ENCODE measurements at regions of chr9 and their contacts with region 1.

Region 1: GRCh38 chr9:20898885-20899554 is 132.4 kb downstream of the HACD4 start:
- DNase-seq: no peak
- ATAC-seq: no peak
- H3K4me3 ChIP-seq: no peak overlapping the region
- H3K27ac ChIP-seq: no peak overlapping the region
- H3K4me1 ChIP-seq: peaks cover 8% of the 10 kb centered on the region
- H3K27me3 ChIP-seq: no peaks in the 10 kb centered on the region
- CTCF ChIP-seq: no peak
- EP300 ChIP-seq: no peak
- POLR2A ChIP-seq: no peak
- RAD21 ChIP-seq: no peak

Region 2: DNA sequence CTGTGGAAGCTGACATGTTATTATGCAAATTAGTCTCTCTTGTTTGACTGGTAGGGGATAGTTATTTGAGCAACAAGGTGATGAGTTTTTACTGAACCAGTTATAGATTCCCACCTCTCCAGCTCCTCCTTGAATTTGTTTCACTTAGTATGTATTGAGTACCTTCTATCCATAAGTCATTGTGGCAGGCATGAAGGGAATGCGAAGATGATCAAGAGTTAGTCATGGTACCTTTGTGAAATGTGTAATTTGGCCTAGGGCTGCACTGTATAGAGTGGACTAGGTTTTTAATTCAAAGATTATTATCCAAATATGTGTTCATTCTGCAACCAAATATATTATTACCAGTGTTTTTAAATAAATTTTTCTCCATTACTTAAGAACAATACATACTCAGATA is 22.3 kb after region 1 on chr9:
- CTCF ChIA-PET with region 1: no interaction called
- POLR2A ChIA-PET with region 1: no interaction called
- in situ Hi-C with region 1: no loop called
- intact Hi-C with region 1: loop called (anchors 1 kb)
- DNase-seq: no peak
- ATAC-seq: no peak
- H3K4me3 ChIP-seq: no peak overlapping the region
- H3K27ac ChIP-seq: no peak overlapping the region
- H3K4me1 ChIP-seq: 0 out of 2 replicates have a peak, but pooled peaks cover 3% of the 10 kb centered on the region
- H3K27me3 ChIP-seq: no peaks in the 10 kb centered on the region
- CTCF ChIP-seq: no peak
- EP300 ChIP-seq: no peak
- POLR2A ChIP-seq: no peak
- RAD21 ChIP-seq: no peak